Heart right ventricle (tissue), 16 donors: ENCODE measurements at regions of chr13 and their contacts with region 1.

Region 1: DNA sequence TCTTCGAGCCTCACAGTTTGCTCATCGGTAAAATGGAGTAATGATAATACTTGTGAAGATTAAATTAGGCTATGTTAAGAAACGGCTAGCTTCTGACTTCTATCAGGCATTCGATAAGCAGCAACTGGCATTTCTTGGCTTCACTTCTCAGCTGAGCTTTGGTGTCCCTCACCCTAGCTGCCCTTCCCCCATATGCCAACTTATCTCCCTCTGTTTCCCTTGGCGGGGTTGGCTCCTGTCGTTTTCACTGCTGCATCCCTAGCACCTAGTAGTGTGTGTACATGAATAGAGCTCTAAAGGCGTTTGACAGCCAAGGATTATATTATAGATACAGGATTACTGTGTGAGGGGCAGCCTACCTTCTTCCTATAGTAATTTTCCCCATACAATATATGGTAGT is 97.5 kb downstream of the TNFSF11 start:
- DNase-seq: no peak
- ATAC-seq: peak in 2 of 8 donors; percentile 33 to 44
- H3K4me3 ChIP-seq: no peak overlapping the region
- H3K27ac ChIP-seq: no peak overlapping the region
- H3K4me1 ChIP-seq: peaks cover 0 to 10% (median 0%) of the 10 kb centered on the region in 9 donors
- H3K27me3 ChIP-seq: no peaks in the 10 kb centered on the region
- CTCF ChIP-seq: no peak

Region 2: DNA sequence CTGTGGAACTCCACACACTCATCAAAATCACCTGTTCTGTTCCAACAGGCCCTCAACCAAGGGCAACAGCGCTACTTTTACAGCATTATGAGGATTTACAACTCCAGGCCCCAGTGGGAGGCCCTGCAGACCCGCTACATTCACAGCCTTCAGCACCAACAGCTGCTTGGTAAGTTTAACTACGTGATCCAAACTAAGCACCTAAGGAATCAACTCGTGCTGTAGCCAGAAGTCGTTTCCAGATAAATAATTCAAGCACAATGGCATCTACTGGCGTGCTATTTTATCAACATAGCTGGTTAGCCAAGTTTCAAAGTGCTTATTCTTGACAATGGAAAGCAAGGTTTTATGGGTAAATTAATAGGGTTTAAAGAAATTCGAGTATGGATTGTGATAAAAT is 115.2 kb after region 1 on chr13:
- intact Hi-C with region 1: loop called in 1 of 10 experiments (anchors 5 kb)
- DNase-seq: no peak
- ATAC-seq: peak in 3 of 8 donors; percentile 61 to 78 (median 70)
- H3K4me3 ChIP-seq: no peak overlapping the region
- H3K27ac ChIP-seq: peak overlapping the region in 6 of 10 donors; percentile 10 to 64 (median 43)
- H3K4me1 ChIP-seq: peaks cover 0 to 10% (median 0%) of the 10 kb centered on the region in 9 donors
- H3K27me3 ChIP-seq: no peaks in the 10 kb centered on the region
- CTCF ChIP-seq: no peak

Region 3: GRCh38 chr13:42906258-42906657 is 234.8 kb after region 1 on chr13:
- intact Hi-C with region 1: no loop called
- DNase-seq: no peak
- ATAC-seq: no peak
- H3K4me3 ChIP-seq: no peak overlapping the region
- H3K27ac ChIP-seq: no peak overlapping the region
- H3K4me1 ChIP-seq: peaks cover 0 to 6% (median 0%) of the 10 kb centered on the region in 9 donors
- H3K27me3 ChIP-seq: no peaks in the 10 kb centered on the region
- CTCF ChIP-seq: no peak